HCT116 (cell line): ENCODE measurements at regions of chr19 and their contacts with region 1.

Region 1: DNA sequence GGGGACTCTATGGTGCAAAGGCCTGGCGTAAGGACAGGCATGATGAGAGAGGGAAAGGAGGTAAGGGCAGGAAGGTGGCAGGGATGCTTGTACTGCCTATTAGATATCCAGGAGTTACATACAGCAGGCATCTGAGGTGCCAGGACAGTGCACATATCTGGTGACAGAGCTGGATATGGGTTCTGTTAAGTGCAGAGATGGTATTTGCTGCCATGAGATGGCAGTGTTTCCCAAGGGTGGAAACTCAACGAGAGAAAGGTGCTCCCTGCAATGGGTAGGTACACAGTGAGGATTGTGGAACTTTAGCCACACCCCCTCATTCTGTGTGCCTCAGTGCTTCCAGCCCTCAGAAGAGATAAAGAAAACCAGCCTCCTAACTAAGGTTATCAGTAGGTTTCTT is 6.9 kb downstream of the TNPO2 start:
- DNase-seq: peak; percentile 62
- ATAC-seq: peak; percentile 87
- H3K4me3 ChIP-seq: no peak overlapping the region
- H3K27ac ChIP-seq: no peak overlapping the region
- H3K4me1 ChIP-seq: peaks cover 0 to 20% of the 10 kb centered on the region in 2 experiments; a peak in 2 of 4 replicates
- H3K27me3 ChIP-seq: no peaks in the 10 kb centered on the region
- CTCF ChIP-seq: peak; percentile 60 to 67 (median 67)
- POLR2A ChIP-seq: no peak
- RAD21 ChIP-seq: peak; percentile 79

Region 2: DNA sequence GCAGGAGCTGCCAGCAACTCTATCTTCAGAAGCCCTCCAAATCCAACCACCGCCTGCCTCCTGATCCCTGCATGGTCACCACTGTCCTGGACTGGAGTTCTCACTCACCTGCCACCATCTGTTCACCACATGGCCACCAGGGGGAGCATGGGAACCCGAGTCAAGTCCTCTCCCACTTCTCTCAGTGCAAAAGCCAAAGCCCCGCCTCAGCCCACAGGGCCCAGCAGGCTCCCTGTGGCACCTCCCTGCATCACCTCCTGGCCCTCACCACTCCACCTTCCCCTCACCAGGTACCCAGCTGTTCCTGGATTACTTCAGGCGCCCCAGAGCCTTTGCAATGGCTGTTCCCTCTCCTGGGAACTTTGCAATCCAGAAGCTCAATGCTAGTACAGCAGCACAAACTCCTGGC is 40.5 kb before region 1 on chr19:
- CTCF ChIA-PET with region 1: no interaction called
- POLR2A ChIA-PET with region 1: no interaction called
- RAD21 ChIA-PET with region 1: no interaction called
- intact Hi-C with region 1: no loop called
- DNase-seq: peak; percentile 67
- ATAC-seq: peak; percentile 69
- H3K4me3 ChIP-seq: no peak overlapping the region
- H3K27ac ChIP-seq: no peak overlapping the region
- H3K4me1 ChIP-seq: peaks cover 5 to 13% of the 10 kb centered on the region in 2 experiments; a peak in 3 of 4 replicates
- H3K27me3 ChIP-seq: no peaks in the 10 kb centered on the region
- CTCF ChIP-seq: peak; percentile 61 to 94 (median 91)
- POLR2A ChIP-seq: no peak
- RAD21 ChIP-seq: peak; percentile 63

Region 3: GRCh38 chr19:12757544-12758274 is 40.8 kb after region 1 on chr19:
- CTCF ChIA-PET with region 1: interaction called, 6 read pairs
- POLR2A ChIA-PET with region 1: interaction called, 3 read pairs
- RAD21 ChIA-PET with region 1: interaction called in 1 of 2 experiments, 3 read pairs
- intact Hi-C with region 1: loop called (anchors 1 kb)
- DNase-seq: peak; percentile 52
- ATAC-seq: peak; percentile 87
- H3K4me3 ChIP-seq: peak overlapping the region; percentile 33 to 55
- H3K27ac ChIP-seq: peak overlapping the region; percentile 31; the same call in 1 of the 2 replicates
- H3K4me1 ChIP-seq: peaks cover 4 to 13% of the 10 kb centered on the region in 2 experiments; a peak in 3 of 4 replicates
- H3K27me3 ChIP-seq: no peaks in the 10 kb centered on the region
- CTCF ChIP-seq: peak; percentile 72 to 94 (median 88)
- POLR2A ChIP-seq: no peak
- RAD21 ChIP-seq: peak; percentile 64

Region 4: GRCh38 chr19:12796146-12797071 is 79.5 kb after region 1 on chr19:
- CTCF ChIA-PET with region 1: interaction called, 10 read pairs
- POLR2A ChIA-PET with region 1: interaction called, 32 read pairs
- RAD21 ChIA-PET with region 1: no interaction called
- intact Hi-C with region 1: loop called (anchors 1 kb)
- DNase-seq: no peak
- ATAC-seq: peak; percentile 32
- H3K4me3 ChIP-seq: peak overlapping the region in 1 of 2 experiments; percentile 33; a peak in 1 of 4 replicates
- H3K27ac ChIP-seq: peak overlapping the region; percentile 70
- H3K4me1 ChIP-seq: peaks cover 29 to 68% of the 10 kb centered on the region in 2 experiments
- H3K27me3 ChIP-seq: no peaks in the 10 kb centered on the region
- CTCF ChIP-seq: peak in 2 of 3 experiments; percentile 93 to 94; a peak in 4 of 6 replicates
- POLR2A ChIP-seq: peak; percentile 0
- RAD21 ChIP-seq: no peak

Region 5: DNA sequence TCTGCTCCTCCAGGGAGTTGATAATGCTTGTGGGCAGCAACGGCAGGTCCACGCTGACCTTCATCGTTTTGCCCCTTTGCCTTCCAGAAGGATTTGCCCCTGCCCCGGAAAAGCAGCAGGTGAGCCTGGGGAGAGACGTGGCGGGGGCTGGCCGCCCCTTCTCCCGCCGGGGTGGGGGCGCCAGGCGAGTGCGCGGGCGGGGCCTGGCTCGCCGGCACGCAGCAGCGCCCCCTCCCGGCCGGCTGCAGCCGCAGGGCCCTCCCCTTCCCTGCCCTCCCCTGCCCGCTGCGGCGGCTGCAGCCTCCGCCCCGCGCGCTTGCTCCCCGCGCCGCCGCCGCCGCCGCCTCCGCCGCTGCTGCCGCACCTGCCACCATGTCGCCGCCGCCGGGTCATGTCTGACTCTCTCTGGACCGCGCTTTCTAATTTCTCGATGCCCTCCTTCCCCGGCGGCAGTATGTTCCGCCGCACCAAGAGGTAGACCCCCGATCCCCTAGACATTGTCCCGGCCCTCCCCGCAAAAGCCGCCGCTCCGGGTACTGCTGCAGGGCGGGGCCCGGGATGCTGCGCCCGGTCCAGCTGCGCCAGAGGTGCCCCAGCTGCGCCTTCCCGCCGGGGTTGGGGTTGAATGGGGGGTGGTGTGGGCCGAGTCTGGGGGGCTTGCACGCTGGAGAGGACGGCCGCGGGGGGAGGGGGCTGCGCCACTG is 121.5 kb after region 1 on chr19 and contains the start of gene MAST1:
- CTCF ChIA-PET with region 1: interaction called, 3 read pairs
- POLR2A ChIA-PET with region 1: no interaction called
- RAD21 ChIA-PET with region 1: no interaction called
- intact Hi-C with region 1: loop called (anchors 5 kb)
- DNase-seq: no peak
- ATAC-seq: peak; percentile 50
- H3K4me3 ChIP-seq: peak within 1 kb of the TSS; percentile 61 to 88
- H3K27ac ChIP-seq: peak within 1 kb of the TSS; percentile 69
- H3K4me1 ChIP-seq: peaks cover 39 to 67% of the 10 kb centered on the region in 2 experiments
- H3K27me3 ChIP-seq: no peaks in the 10 kb centered on the region
- CTCF ChIP-seq: peak in 2 of 3 experiments; percentile 45 to 53; a peak in 4 of 6 replicates
- POLR2A ChIP-seq: no peak
- RAD21 ChIP-seq: no peak
- total RNA-seq, gene MAST1: 28.9 TPM